Panc1 (cell line): ENCODE measurements at regions of chr17 and their contacts with region 1.

Region 1: GRCh38 chr17:33154869-33155455 is 138.1 kb downstream of the ASIC2 start:
- DNase-seq: no peak
- ATAC-seq: no peak
- H3K4me3 ChIP-seq: no peak overlapping the region
- H3K27ac ChIP-seq: no peak overlapping the region
- H3K4me1 ChIP-seq: no peaks in the 10 kb centered on the region
- H3K27me3 ChIP-seq: no peaks in the 10 kb centered on the region
- CTCF ChIP-seq: no peak

Region 2: DNA sequence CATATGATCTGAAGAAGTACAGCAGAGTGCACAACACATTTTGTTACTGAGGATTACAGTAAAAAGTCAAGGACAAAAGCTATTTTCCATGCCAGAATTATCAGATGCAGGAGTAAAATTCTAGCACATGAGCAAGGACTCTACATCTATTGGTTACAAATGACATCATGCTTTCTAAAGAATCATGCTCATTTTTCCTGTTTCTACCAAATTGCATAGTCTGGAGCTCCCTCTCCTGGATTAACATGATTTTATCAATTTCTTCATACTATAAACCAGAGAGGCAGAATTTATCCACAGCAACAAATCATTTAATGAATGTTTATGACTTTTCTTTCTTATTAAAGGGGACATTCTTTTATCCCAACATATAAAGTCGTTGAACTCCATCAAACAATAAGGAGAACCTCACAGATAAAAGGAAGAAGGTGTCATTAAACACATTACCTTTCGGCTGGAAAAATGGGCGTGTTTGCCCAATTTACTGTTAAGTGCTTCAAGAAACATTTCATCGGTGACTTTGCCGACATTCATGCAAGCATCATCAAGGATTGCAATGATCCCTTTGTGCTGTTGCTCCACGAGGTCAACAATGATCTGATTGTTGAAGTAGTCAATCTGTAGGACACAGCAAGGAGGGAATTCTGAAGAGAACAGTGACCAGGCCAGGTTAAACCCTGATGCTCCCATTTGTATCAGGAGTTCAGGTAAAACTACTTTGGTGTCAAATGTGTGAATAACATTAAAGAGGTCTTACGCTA is 399.7 kb before region 1 on chr17:
- CTCF ChIA-PET with region 1: no interaction called
- POLR2A ChIA-PET with region 1: no interaction called
- in situ Hi-C with region 1: no loop called
- intact Hi-C with region 1: no loop called
- DNase-seq: peak; percentile 28
- ATAC-seq: peak; percentile 81
- H3K4me3 ChIP-seq: no peak overlapping the region
- H3K27ac ChIP-seq: no peak overlapping the region
- H3K4me1 ChIP-seq: no peaks in the 10 kb centered on the region
- H3K27me3 ChIP-seq: peaks cover 6% of the 10 kb centered on the region
- CTCF ChIP-seq: peak; percentile 52; the same call in 1 of the 2 replicates

Region 3: GRCh38 chr17:34598161-34598776 is 1443.3 kb after region 1 on chr17:
- CTCF ChIA-PET with region 1: no interaction called
- POLR2A ChIA-PET with region 1: interaction called, 17 read pairs
- in situ Hi-C with region 1: no loop called
- intact Hi-C with region 1: no loop called
- DNase-seq: no peak
- ATAC-seq: no peak
- H3K4me3 ChIP-seq: no peak overlapping the region
- H3K27ac ChIP-seq: no peak overlapping the region
- H3K4me1 ChIP-seq: no peaks in the 10 kb centered on the region
- H3K27me3 ChIP-seq: no peaks in the 10 kb centered on the region; the same call in 1 of the 2 replicates
- CTCF ChIP-seq: no peak